ENCODE measurements at regions of chr15 and their contacts with region 1.

Region 1: GRCh38 chr15:92097474-92098178 is 244.1 kb downstream of the SLCO3A1 start:
- DNase-seq: peak in 7 of 10 donors; percentile 34 to 89 (median 58)

Region 2: GRCh38 chr15:92077353-92078085 is 20.1 kb before region 1 on chr15:
- intact Hi-C with region 1: no loop called
- DNase-seq: peak; percentile 65 to 97 (median 78)

Region 3: GRCh38 chr15:92205255-92205739 is 107.7 kb after region 1 on chr15:
- intact Hi-C with region 1: loop called (anchors 5 kb)
- DNase-seq: peak in 4 of 10 donors; percentile 5 to 30 (median 16)

Region 4: GRCh38 chr15:92226014-92226612 is 128.5 kb after region 1 on chr15:
- intact Hi-C with region 1: loop called (anchors 1 kb)
- DNase-seq: peak in 3 of 10 donors; percentile 9 to 57 (median 35)

Measured in posterior cingulate gyrus (tissue), 11 donors.